ENCODE measurements at regions of chr14 and their contacts with region 1.

Region 1: DNA sequence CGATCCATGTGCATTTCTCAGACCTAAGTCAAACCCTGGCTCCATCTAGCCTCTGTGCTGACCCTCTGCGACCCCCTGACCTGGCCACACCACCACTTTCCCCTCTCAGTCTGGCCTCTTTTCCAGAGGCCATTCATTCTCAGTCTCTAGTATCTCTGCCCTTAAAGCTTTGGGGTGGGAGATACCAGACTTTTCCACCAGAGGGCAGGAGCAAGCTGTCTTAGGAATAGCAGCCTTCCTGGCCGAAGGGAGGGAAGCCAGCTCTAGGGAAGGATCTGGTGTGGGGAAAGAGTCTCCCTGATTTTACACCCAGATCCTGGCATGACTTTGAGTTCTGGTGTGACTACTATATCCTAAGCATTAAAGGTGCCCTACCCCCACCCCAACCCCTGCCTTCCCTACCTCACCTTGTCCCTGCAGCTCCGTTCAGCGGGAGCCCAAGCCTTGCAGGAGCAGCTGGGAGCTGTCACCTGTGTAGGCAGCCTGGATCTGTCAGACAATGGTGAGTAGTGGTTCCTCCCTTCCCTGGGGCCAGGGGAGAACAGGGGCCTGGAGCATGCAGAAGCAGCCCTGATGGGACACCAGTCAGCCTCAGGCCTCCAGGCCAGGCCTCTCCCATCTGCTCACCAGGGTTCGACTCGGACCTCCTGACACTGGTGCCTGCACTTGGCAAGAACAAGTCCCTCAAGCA is 6.6 kb downstream of the CARMIL3 start:
- DNase-seq: peak in 8 of 10 donors; percentile 27 to 76 (median 56)
- ATAC-seq: peak; percentile 74 to 79
- H3K4me3 Mint-ChIP-seq: no peak overlapping the region
- H3K27ac Mint-ChIP-seq: peak overlapping the region in 2 of 10 donors; percentile 37 to 74
- H3K4me1 Mint-ChIP-seq: peaks cover under 1 to 10% (median 6%) of the 10 kb centered on the region in 4 donors
- H3K27me3 Mint-ChIP-seq: peaks cover under 1 to 22% (median 6%) of the 10 kb centered on the region in 5 donors

Region 2: DNA sequence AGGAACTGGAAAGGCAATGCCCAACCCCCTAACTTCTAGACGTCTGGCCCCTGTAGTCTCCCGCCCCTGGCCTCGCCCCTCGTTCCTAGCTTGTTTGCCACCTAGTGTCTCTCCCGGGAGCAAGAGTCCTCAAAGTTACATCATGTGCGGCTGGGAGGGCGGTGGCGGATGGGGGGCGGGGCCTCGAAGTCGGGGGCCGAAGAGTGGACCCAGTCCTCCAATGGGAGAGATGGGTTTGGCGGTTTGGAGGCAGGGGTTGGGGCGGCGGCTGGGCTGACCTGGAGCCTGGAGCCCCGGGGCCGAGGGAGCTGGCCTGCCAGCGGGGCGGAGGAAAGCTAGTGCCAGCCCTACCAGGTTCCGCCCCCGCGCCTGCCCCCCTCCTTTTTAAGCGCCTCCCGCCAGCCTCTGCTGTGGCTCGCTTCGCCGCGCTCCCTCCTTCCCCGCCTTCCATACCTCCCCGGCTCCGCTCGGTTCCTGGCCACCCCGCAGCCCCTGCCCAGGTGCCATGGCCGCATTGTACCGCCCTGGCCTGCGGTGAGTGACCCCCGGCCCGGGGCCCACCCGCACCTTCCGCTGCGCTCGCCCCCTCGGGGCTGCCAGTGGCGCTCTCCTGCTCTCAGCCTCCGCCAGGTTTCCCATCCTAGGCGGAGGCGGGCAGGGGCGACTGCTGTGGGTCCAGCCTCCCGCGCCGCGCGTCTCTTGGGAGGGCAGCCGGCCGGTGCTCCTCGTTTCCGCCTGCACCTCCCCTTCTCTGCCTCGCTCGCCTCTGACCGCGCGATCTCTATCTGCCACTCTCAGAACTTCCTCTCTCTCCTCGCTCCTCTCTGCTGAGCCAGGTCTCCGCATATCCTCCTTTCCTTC is 35.7 kb after region 1 on chr14 and contains the start of gene PCK2:
- POLR2A ChIA-PET with region 1: interaction called, 12 read pairs
- DNase-seq: peak; percentile 40 to 78 (median 62)
- ATAC-seq: peak; percentile 78 to 83
- H3K4me3 Mint-ChIP-seq: peak within 1 kb of the TSS; percentile 95 to 99 (median 98)
- H3K27ac Mint-ChIP-seq: peak within 1 kb of the TSS; percentile 93 to 99 (median 97)
- H3K4me1 Mint-ChIP-seq: peaks cover 29 to 40% (median 34%) of the 10 kb centered on the region in 4 donors
- H3K27me3 Mint-ChIP-seq: no peaks in the 10 kb centered on the region
- polyA plus RNA-seq, gene PCK2: 8.6 to 11.6 (median 11.3) TPM